ENCODE measurements at regions of chr7 and their contacts with region 1.

Region 1: GRCh38 chr7:151863386-151864079 is 13.4 kb downstream of the PRKAG2 start:
- DNase-seq: no peak
- H3K4me3 ChIP-seq: no peak overlapping the region
- H3K27ac ChIP-seq: no peak overlapping the region
- H3K4me1 ChIP-seq: peaks cover 0 to 11% (median 8%) of the 10 kb centered on the region in 4 donors
- H3K27me3 ChIP-seq: no peaks in the 10 kb centered on the region
- CTCF ChIP-seq: no peak
- EP300 ChIP-seq: no peak
- POLR2A ChIP-seq: no peak

Region 2: GRCh38 chr7:151795168-151795811 is 68.2 kb before region 1 on chr7:
- intact Hi-C with region 1: loop called (anchors 5 kb)
- DNase-seq: peak; percentile 62
- H3K4me3 ChIP-seq: no peak overlapping the region
- H3K27ac ChIP-seq: no peak overlapping the region
- H3K4me1 ChIP-seq: peaks cover 0 to 28% (median 15%) of the 10 kb centered on the region in 4 donors
- H3K27me3 ChIP-seq: no peaks in the 10 kb centered on the region
- CTCF ChIP-seq: no peak
- EP300 ChIP-seq: no peak
- POLR2A ChIP-seq: no peak